ENCODE measurements at regions of chr12 and their contacts with region 1.

Region 1: GRCh38 chr12:55073043-55074022 is 52.9 kb upstream of the OR9K2 start:
- DNase-seq: peak; percentile 84
- H3K4me3 Mint-ChIP-seq: no peak overlapping the region
- H3K27ac Mint-ChIP-seq: no peak overlapping the region
- H3K4me1 Mint-ChIP-seq: peaks cover 4% of the 10 kb centered on the region
- H3K27me3 Mint-ChIP-seq: peaks cover 21% of the 10 kb centered on the region

Region 2: DNA sequence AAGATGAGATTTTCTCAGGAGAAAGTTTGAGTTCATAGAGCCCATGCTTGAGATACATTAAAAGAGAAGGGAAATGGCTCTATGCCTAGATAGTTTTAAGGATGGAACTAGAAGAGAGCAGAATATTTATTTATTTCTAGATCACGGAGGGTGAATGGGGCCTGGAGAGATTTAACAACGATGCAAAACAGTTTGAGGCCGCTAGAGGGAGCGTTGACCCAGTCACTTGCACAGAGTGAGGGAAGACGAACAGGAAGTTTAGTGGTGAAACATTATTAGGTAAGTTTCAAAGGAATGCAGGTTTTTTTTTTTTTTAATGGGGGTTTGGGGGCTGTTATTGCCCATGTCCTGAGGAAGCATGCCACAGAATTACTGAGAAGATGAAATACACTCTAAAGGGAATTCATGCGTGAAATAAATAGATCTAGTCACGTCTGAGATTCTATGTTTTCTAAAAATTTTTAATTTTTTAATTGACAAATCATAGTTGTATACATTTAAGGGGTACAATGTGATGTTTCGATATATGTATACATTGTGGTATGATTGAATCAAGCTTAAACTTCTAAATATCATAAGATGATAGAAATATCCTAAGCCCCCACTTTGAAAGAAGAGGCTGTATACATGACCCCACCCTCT is 470.0 kb before region 1 on chr12:
- CTCF ChIA-PET with region 1: interaction called, 4 read pairs
- POLR2A ChIA-PET with region 1: no interaction called
- intact Hi-C with region 1: loop called (anchors 10 kb)
- DNase-seq: peak; percentile 78
- H3K4me3 Mint-ChIP-seq: no peak overlapping the region
- H3K27ac Mint-ChIP-seq: no peak overlapping the region
- H3K4me1 Mint-ChIP-seq: peaks cover 6% of the 10 kb centered on the region
- H3K27me3 Mint-ChIP-seq: peaks cover 4% of the 10 kb centered on the region

Region 3: DNA sequence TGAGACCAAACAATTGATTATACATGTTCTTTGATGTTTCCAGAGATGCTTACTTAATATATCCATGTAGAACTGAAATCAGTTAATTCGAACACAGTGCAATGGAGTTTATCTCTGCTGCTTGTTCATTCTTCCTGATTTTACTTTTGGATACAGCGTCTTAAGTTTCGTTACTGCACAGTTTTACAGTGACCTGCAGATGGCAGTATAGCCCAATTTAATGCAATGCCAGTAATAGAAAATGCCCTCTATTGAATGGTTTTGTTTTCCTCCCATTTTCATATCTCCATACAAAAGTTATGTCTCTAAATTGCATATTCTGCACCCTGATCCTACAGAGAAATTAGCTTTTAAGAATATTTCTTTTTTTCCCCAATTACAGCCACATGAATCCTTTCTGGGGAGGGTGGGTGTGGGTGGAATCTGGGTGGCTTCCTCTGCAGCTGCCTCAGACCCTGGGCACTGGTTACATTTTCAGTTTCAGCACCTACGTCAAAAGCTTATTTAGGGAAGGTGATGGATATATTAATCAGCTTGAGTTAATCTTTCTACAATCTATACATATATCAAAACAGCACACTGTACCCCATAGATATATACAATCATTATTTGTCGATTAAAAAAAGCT is 324.0 kb before region 1 on chr12:
- CTCF ChIA-PET with region 1: interaction called, 174 read pairs
- POLR2A ChIA-PET with region 1: no interaction called
- intact Hi-C with region 1: loop called (anchors 1 kb)
- DNase-seq: peak; percentile 22
- H3K4me3 Mint-ChIP-seq: peak overlapping the region; percentile 17
- H3K27ac Mint-ChIP-seq: no peak overlapping the region
- H3K4me1 Mint-ChIP-seq: peaks cover 20% of the 10 kb centered on the region
- H3K27me3 Mint-ChIP-seq: no peaks in the 10 kb centered on the region

Region 4: DNA sequence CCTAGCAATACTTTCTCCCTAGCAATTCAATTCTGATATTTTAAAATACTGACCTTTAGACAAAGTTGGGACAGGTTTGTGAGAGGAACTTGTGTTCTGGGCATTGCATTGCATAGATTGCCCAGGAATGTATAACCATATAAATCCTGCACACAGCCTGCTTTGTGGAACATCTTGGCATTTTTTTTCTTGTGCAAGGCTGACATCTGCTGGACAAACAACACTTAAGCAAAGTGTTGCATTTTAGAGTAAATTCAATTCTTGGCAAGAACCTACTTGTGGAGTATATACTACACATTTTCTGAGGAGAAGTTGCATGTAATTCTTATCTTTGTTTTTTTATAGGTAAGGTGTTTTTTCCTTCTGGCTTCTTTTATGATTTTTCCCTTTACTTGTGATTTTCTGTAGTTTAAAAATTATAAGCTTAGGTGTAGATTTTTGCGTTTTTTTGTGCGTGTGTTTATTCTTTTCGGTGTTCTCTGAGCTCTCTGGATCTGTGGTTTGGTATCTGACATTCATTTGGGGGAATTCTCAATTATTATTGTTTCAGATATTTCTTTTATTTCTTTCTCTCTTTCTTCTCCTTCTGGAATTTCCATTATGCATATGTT is 115.2 kb before region 1 on chr12:
- CTCF ChIA-PET with region 1: interaction called, 21 read pairs
- POLR2A ChIA-PET with region 1: no interaction called
- intact Hi-C with region 1: loop called (anchors 1 kb)
- DNase-seq: peak; percentile 55
- H3K4me3 Mint-ChIP-seq: no peak overlapping the region
- H3K27ac Mint-ChIP-seq: peak overlapping the region; percentile 93
- H3K4me1 Mint-ChIP-seq: peaks cover 86% of the 10 kb centered on the region
- H3K27me3 Mint-ChIP-seq: no peaks in the 10 kb centered on the region

Region 5: GRCh38 chr12:54984658-54985376 is 88.5 kb before region 1 on chr12 and contains the start of gene TESPA1:
- CTCF ChIA-PET with region 1: interaction called, 48 read pairs
- POLR2A ChIA-PET with region 1: interaction called, 3 read pairs
- intact Hi-C with region 1: no loop called
- DNase-seq: peak; percentile 93
- H3K4me3 Mint-ChIP-seq: peak within 1 kb of the TSS; percentile 79
- H3K27ac Mint-ChIP-seq: peak within 1 kb of the TSS; percentile 90
- H3K4me1 Mint-ChIP-seq: peaks cover 68% of the 10 kb centered on the region
- H3K27me3 Mint-ChIP-seq: no peaks in the 10 kb centered on the region
- total RNA-seq, gene TESPA1: 73.9 to 74.8 TPM

Region 6: DNA sequence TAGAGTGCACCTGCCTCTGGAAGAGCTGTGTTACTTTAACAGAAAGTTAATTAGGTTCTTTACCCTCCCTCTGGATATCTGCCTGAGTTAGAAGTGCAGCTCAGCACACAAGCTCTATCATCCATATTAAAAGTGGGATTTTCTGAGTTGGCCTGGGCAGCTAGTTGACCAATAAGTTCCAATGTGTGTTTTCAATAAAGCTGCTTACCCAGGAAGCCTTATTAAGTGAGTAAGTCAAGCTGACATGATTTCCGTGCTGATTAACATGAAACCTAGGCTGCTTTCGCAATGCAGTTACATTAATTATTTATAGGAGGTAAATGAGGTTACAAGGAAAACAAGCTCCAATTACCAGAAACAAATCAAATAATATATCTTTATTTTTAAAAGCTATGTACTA is 48.8 kb before region 1 on chr12:
- CTCF ChIA-PET with region 1: interaction called, 10 read pairs
- POLR2A ChIA-PET with region 1: no interaction called
- intact Hi-C with region 1: no loop called
- DNase-seq: no peak
- H3K4me3 Mint-ChIP-seq: no peak overlapping the region
- H3K27ac Mint-ChIP-seq: no peak overlapping the region
- H3K4me1 Mint-ChIP-seq: peaks cover 4% of the 10 kb centered on the region
- H3K27me3 Mint-ChIP-seq: peaks cover 29% of the 10 kb centered on the region

Region 7: DNA sequence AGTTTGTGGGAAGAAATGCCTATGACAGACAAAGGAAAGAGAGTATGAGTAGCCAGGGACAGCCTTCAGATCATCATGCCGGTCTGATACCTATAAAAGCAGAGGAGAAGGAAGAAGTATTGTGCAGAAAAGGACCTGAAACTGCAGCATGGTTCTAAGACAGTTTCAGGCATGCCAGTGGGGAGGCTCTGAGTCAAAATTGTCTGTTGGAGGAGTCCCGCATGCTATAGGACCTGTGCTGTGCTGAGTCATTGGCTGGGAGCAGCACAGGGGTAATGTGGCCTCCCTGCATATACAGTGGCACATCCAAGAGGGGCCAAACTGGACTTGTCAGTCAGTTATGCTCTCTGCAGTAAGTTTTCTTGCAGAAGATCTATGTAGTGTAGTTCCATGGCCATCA is 12.9 kb before region 1 on chr12:
- CTCF ChIA-PET with region 1: interaction called, 12 read pairs
- POLR2A ChIA-PET with region 1: no interaction called
- intact Hi-C with region 1: no loop called
- DNase-seq: peak; percentile 72
- H3K4me3 Mint-ChIP-seq: no peak overlapping the region
- H3K27ac Mint-ChIP-seq: no peak overlapping the region
- H3K4me1 Mint-ChIP-seq: peaks cover 11% of the 10 kb centered on the region
- H3K27me3 Mint-ChIP-seq: peaks cover 1% of the 10 kb centered on the region

Measured in activated CD4-positive, alpha-beta memory T cell treated with anti-CD3 and anti-CD28 coated beads for 36 hours (primary cell).